ENCODE measurements at regions of chr20 and their contacts with region 1.

Region 1: DNA sequence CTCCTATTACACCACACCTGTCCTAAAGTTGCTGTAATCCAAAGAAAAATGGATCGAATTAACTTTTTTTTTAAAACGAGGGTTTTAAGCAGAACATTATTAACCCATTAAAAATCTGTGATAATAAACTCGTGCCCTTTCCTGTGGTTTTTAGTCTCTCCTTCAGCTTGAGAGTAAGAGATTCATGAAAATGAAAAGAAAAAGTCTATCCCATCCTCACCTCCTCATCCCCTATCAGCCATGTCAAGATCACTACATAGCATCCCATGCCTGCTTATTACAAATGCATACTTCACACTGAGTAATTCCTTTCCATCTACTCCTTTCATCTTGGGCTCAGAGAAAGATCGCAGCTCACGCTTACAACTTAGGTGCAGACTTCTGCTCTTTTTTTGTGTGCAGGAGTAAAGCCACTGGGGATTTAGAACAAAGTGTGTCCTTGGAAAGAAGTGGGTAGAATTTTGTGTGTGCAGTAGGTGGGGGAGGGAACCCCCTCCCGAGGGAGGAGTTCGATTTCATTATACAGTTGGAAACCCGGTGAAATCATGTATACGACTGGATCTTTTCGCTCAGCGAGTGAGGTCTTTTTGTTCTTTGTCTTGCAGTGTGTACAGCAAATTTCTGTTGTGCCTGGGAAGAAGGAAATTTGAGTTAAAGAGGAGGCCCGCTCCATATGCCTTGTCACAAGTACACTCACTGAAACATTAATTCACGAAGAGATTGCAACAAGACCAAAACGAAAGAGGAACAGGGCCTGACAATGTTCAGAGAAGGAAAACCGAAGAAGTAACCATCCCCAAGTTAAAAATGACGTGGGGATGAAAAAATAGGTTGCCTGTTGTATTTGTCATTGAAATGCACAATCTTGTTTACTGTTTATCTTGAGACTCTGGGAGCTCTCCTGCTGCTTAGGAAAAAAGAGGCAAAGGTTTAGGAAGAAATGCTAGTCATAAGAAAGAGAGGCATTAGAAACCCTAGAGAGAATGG is 146.5 kb upstream of the ZNF217 start:
- H3K4me3 Mint-ChIP-seq: peak overlapping the region; percentile 59
- H3K27ac Mint-ChIP-seq: peak overlapping the region; percentile 89
- H3K4me1 Mint-ChIP-seq: peaks cover 71% of the 10 kb centered on the region
- H3K27me3 Mint-ChIP-seq: no peaks in the 10 kb centered on the region

Region 2: DNA sequence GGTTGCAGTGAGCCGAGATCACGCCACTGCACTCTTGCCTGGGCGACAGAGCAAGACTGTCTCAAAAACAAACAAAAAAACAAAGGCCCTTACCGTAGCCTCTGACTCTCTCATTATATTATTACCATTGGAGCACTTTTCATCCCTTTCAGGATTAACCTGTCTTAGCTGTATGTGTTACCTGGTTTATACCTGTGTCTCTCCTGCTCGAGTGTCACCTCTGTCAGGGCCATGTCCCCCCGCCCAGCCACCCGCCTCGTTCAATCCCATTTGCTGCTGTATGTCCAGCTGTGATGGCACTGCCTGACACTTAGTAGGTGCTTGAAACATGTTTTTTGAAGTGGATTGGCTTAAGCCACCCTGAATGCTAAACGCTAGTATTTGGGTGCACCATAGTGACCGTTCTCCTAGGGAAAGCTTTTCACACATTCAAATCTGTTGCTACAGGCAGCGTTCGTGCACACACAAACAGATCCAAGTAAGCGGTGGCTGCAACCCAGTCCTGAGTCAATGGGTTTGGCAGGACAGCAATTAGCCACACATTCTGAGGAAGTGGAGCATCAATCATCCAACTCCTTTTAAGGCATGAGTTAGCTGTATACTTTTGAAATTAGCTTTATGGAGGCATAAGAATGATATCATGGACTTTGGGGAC is 47.6 kb before region 1 on chr20:
- intact Hi-C with region 1: no loop called
- H3K4me3 Mint-ChIP-seq: peak overlapping the region; percentile 13
- H3K27ac Mint-ChIP-seq: peak overlapping the region; percentile 39
- H3K4me1 Mint-ChIP-seq: peaks cover 40% of the 10 kb centered on the region
- H3K27me3 Mint-ChIP-seq: no peaks in the 10 kb centered on the region

Region 3: GRCh38 chr20:53708129-53708968 is 31.7 kb before region 1 on chr20:
- intact Hi-C with region 1: loop called (anchors 5 kb)
- H3K4me3 Mint-ChIP-seq: peak overlapping the region; percentile 61
- H3K27ac Mint-ChIP-seq: peak overlapping the region; percentile 98
- H3K4me1 Mint-ChIP-seq: peaks cover 50% of the 10 kb centered on the region
- H3K27me3 Mint-ChIP-seq: no peaks in the 10 kb centered on the region